T-cell (primary cell): ENCODE measurements at regions of chr14 and their contacts with region 1.

Region 1: GRCh38 chr14:98952595-98953350 is 319.2 kb downstream of the BCL11B start:
- DNase-seq: no peak
- ATAC-seq: no peak
- H3K4me3 ChIP-seq: no peak overlapping the region
- H3K4me3 Mint-ChIP-seq: no peak overlapping the region
- H3K27ac ChIP-seq: no peak overlapping the region
- H3K27ac Mint-ChIP-seq: no peak overlapping the region
- H3K4me1 ChIP-seq: peaks cover 0 to 3% of the 10 kb centered on the region in 2 experiments
- H3K4me1 Mint-ChIP-seq: peaks cover 1 to 13% (median 2%) of the 10 kb centered on the region in 3 donors
- H3K27me3 ChIP-seq: no peaks in the 10 kb centered on the region
- H3K27me3 Mint-ChIP-seq: no peaks in the 10 kb centered on the region

Region 2: GRCh38 chr14:98999345-98999744 is 46.6 kb after region 1 on chr14:
- CTCF ChIA-PET with region 1: no interaction called
- POLR2A ChIA-PET with region 1: no interaction called
- DNase-seq: no peak
- ATAC-seq: no peak
- H3K4me3 ChIP-seq: no peak overlapping the region
- H3K4me3 Mint-ChIP-seq: no peak overlapping the region
- H3K27ac ChIP-seq: no peak overlapping the region
- H3K27ac Mint-ChIP-seq: no peak overlapping the region
- H3K4me1 ChIP-seq: peaks cover 7% of the 10 kb centered on the region in 2 experiments
- H3K4me1 Mint-ChIP-seq: peaks cover 14 to 18% (median 14%) of the 10 kb centered on the region in 3 donors
- H3K27me3 ChIP-seq: no peaks in the 10 kb centered on the region
- H3K27me3 Mint-ChIP-seq: no peaks in the 10 kb centered on the region

Region 3: DNA sequence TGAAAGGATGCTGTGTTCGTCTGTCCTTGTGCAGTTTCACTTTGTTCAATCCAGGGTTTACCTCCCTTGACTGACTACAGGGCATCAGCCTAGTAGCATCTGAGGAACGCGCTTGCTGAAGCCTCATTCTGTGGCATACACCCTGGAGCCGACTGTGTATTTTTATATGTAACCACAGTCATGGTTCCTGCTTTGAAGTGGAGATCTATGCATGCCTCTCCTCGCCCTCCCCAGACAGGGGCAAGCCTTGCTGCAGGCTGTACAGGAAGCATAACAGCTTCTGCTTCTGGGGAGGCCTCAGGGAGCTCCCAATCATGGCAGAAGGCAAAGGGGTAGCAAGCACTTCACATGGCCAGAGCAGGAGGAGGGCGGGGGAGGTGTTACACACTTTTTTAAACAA is 57.1 kb after region 1 on chr14:
- CTCF ChIA-PET with region 1: no interaction called
- POLR2A ChIA-PET with region 1: interaction called in 1 of 2 experiments, 11 read pairs
- DNase-seq: peak in 20 of 35 experiments; percentile 2 to 35 (median 20)
- ATAC-seq: peak; percentile 85 to 91 (median 88)
- H3K4me3 ChIP-seq: no peak overlapping the region
- H3K4me3 Mint-ChIP-seq: peak overlapping the region; percentile 25 to 66 (median 42)
- H3K27ac ChIP-seq: peak overlapping the region; percentile 9
- H3K27ac Mint-ChIP-seq: peak overlapping the region; percentile 53 to 86
- H3K4me1 ChIP-seq: peaks cover 3 to 14% of the 10 kb centered on the region in 2 experiments
- H3K4me1 Mint-ChIP-seq: peaks cover 12 to 17% (median 17%) of the 10 kb centered on the region in 3 donors
- H3K27me3 ChIP-seq: peaks cover 0 to 5% of the 10 kb centered on the region in 2 experiments
- H3K27me3 Mint-ChIP-seq: no peaks in the 10 kb centered on the region